Activated naive CD4-positive, alpha-beta T cell treated with anti-CD3 and anti-CD28 coated beads for 36 hours (primary cell): ENCODE measurements at regions of chr11 and their contacts with region 1.

Region 1: DNA sequence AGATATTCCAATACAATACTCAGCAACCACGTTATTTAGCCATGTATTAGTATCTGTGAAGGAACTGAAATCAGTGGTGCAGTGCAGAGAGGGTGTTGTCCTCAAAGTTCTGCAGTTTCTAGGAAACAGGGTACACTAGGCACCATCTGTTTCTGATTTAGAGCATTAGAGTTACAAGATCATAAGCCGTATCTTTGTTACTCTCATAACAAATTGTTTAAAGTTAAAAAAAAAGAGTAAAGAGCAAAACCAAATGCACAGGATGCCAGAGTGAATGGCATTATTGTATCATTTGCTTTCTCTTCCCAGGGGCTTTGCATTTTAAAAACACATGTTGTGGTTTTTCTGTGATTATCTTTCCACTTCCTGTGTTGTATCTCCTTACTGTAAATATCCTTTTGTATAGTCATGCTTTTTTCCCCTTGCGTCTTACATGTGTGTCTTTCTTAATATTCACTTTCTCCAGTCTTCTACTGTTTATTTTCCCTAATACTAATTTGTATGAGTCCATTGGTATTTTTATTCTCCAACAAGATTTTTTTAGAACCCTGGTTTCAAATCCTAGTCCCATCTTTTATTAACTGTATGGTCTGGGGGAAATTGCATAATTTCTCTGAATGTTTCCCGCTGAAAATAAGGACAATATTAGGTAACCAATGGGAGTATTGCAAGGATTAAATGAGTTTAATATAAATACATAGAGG is 15.2 kb upstream of the NUP160 start:
- DNase-seq: no peak
- H3K4me3 Mint-ChIP-seq: no peak overlapping the region
- H3K27ac Mint-ChIP-seq: no peak overlapping the region
- H3K4me1 Mint-ChIP-seq: peaks cover 33% of the 10 kb centered on the region
- H3K27me3 Mint-ChIP-seq: no peaks in the 10 kb centered on the region

Region 2: GRCh38 chr11:47886096-47886495 is 22.8 kb after region 1 on chr11:
- CTCF ChIA-PET with region 1: interaction called, 3 read pairs
- intact Hi-C with region 1: loop called (anchors 2 kb)
- DNase-seq: peak; percentile 52
- H3K4me3 Mint-ChIP-seq: no peak overlapping the region
- H3K27ac Mint-ChIP-seq: peak overlapping the region; percentile 75
- H3K4me1 Mint-ChIP-seq: peaks cover 51% of the 10 kb centered on the region
- H3K27me3 Mint-ChIP-seq: no peaks in the 10 kb centered on the region

Region 3: DNA sequence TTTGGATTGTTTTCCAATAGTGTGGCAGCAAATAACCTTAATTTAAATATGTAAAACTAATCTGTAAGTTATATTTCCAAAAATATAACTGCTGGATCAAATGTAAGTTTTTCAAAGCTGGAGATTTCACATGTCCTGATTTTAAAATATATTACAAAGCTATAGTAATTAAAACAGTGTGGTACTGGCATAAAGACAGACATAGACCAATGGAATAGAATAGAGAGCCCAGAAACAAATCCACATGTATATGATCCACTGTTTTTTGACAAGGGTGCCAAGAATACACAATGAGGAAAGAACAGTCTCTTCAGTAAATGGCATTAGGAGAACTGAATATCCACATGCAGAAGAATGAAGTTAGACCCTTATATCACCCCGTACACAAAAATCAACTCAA is 385.6 kb after region 1 on chr11:
- CTCF ChIA-PET with region 1: no interaction called
- intact Hi-C with region 1: no loop called
- DNase-seq: no peak
- H3K4me3 Mint-ChIP-seq: no peak overlapping the region
- H3K27ac Mint-ChIP-seq: no peak overlapping the region
- H3K4me1 Mint-ChIP-seq: no peaks in the 10 kb centered on the region
- H3K27me3 Mint-ChIP-seq: peaks cover 7% of the 10 kb centered on the region